RWPE1 (cell line): ENCODE measurements at regions of chr4 and their contacts with region 1.

Region 1: DNA sequence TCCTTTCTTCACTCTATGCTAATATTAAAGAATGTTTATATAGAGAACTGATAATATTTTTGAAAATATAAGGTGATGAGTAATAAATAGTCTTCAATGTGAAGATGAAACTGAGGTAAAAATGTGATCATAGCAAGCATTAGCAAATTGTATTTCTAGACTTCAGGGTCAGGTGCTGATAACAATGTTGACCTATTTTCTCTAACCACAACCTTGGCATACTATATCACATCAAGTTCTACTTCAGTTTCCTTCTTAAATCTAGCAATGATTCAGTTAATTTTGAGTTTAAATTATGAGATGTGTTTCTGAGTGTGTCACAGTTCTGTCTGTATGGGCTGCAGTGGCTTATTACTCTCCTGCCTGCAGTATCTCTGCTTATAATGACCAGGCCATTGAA is 209.4 kb downstream of the RAPGEF2 start:
- DNase-seq: no peak
- H3K27ac ChIP-seq: no peak overlapping the region
- CTCF ChIP-seq: no peak

Region 2: DNA sequence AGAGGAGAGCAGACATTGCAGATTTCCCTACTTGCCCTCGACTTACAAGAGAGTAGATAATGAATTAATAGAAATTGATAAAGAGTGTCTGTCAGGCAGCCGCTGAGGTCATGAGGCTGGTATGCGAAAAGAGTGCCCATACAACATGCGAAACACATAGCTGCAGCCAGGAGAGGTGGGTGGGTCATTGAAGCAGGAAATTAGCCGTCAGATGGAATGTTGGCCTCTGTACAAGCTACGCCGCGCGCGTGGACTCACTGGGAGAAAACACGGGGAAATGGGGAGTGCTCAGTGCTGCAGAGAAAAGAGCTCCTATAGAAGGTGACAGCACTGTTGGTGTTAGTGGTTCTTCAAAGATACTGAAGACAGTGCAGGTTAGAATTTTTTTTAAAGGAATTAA is 84.3 kb before region 1 on chr4:
- CTCF ChIA-PET with region 1: interaction called, 11 read pairs
- POLR2A ChIA-PET with region 1: no interaction called
- DNase-seq: peak; percentile 46
- H3K27ac ChIP-seq: no peak overlapping the region
- CTCF ChIP-seq: no peak

Region 3: GRCh38 chr4:159358226-159358625 is 46.0 kb after region 1 on chr4:
- CTCF ChIA-PET with region 1: no interaction called
- POLR2A ChIA-PET with region 1: no interaction called
- DNase-seq: peak; percentile 18
- H3K27ac ChIP-seq: no peak overlapping the region
- CTCF ChIP-seq: no peak

Region 4: DNA sequence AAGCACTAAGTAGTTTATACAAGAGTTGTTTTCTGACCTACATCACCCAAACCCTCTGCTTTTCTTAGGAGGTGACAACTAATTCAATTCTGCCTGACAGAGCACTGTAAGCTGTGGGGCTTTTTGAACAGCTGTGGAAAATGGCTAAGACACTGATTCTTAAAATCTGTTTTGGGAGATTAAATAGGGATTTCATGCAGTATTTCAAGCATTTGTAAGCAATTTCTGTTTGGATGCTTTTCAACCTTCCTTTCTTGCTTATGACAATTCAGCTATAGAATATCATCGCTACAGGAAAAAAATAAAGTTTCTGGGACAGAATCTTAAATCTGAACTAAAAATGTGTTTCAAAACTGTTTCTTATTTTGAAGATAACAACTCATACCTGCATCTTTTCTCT is 250.1 kb after region 1 on chr4:
- CTCF ChIA-PET with region 1: no interaction called
- POLR2A ChIA-PET with region 1: no interaction called
- DNase-seq: no peak
- H3K27ac ChIP-seq: no peak overlapping the region
- CTCF ChIP-seq: no peak